MCF 10A (cell line): ENCODE measurements at regions of chr11 and their contacts with region 1.

Region 1: DNA sequence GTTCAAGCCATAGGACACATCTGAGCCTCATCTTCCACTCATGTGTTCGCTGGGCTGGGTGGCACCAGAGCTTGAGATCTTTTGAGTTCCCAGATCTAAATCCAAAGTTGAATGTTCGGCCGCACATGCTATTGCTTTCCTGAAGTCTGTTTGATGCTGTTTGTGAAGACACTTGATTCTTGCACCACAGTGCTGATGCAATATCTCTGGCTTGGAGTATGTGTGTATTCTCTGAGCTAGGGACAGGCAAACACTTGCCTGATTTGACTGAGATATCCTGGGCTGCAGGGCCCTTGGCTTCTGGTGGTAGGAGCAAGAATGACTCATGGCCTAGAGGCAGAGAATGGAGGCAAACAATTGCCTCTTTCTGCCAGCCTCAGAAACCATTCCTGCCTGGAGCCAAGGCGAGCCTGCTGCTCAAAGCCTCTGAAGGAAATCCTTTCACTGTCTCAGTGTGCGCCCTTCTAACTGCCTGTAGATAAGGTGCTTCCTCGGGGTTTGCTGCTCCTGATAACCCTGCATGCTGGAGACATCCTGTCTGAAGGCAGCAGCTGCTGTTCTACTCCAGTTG is 73.0 kb downstream of the CYB5R2 start:
- DNase-seq: peak; percentile 99
- H3K4me3 Mint-ChIP-seq: peak overlapping the region; percentile 53
- H3K27ac Mint-ChIP-seq: peak overlapping the region; percentile 93
- H3K4me1 Mint-ChIP-seq: peaks cover 35% of the 10 kb centered on the region
- H3K27me3 Mint-ChIP-seq: no peaks in the 10 kb centered on the region
- CTCF ChIP-seq: no peak

Region 2: DNA sequence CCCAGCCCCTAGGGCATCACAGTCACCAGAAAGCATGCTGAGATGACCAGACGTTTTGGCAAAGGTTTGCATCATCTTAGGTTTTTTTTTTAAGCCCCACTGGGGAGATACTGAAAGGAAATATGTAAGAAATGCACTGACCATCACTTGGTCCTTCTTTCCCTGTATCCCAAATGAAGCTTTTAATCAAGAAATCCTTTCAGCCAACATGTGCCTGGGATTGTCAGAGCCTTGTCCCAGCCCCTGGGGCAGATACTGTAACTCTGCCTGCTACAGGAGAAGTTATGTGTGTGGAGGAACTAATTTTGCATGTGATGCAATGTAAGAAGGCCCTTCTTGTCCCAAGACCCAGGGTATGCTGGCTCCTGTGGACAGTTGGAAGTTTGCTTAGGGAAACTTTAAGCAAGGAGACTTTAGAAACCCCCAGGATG is 20.9 kb before region 1 on chr11:
- CTCF ChIA-PET with region 1: interaction called, 11 read pairs
- POLR2A ChIA-PET with region 1: interaction called, 17 read pairs
- intact Hi-C with region 1: loop called (anchors 1 kb)
- DNase-seq: peak; percentile 47
- H3K4me3 Mint-ChIP-seq: no peak overlapping the region
- H3K27ac Mint-ChIP-seq: peak overlapping the region; percentile 55
- H3K4me1 Mint-ChIP-seq: peaks cover 54% of the 10 kb centered on the region
- H3K27me3 Mint-ChIP-seq: no peaks in the 10 kb centered on the region
- CTCF ChIP-seq: no peak

Region 3: DNA sequence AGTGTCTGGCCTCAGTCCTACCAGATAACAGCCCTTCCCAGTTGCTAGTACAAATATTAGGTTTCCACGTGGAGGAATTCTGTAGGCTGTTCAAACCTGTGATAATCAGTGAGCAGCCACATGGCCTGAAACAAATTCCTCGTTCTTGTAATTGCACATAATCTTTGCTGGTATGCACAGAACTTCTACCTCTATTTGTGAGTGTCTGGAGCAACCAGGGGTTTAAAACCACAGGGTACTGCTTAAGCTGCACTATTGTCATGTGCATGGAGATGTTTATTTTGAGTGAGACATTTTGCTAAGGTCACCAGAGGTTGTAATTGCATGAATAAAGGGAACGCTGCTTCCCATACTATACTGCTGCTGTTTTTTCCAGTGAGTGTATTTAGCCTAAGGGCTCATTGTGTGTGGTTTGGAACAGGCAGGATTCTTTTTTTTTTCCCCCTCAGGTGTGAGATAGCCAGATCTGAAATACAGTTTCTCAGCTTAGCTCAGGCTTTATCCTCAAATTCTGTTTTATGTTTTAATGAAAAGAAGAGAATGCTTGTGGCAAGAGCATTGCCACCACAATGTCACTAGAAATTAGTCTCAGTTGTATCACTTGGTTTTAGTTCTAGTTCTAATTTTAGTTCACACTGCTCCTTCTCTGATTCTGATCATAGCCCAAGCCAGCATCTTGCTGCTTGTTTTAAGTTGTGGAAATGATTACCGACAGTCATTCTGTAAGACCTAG is 12.5 kb after region 1 on chr11:
- CTCF ChIA-PET with region 1: interaction called, 7 read pairs
- POLR2A ChIA-PET with region 1: interaction called, 25 read pairs
- intact Hi-C with region 1: no loop called
- DNase-seq: peak; percentile 34
- H3K4me3 Mint-ChIP-seq: no peak overlapping the region
- H3K27ac Mint-ChIP-seq: no peak overlapping the region
- H3K4me1 Mint-ChIP-seq: peaks cover 24% of the 10 kb centered on the region
- H3K27me3 Mint-ChIP-seq: no peaks in the 10 kb centered on the region
- CTCF ChIP-seq: no peak